ENCODE measurements at regions of chr15 and their contacts with region 1.

Region 1: DNA sequence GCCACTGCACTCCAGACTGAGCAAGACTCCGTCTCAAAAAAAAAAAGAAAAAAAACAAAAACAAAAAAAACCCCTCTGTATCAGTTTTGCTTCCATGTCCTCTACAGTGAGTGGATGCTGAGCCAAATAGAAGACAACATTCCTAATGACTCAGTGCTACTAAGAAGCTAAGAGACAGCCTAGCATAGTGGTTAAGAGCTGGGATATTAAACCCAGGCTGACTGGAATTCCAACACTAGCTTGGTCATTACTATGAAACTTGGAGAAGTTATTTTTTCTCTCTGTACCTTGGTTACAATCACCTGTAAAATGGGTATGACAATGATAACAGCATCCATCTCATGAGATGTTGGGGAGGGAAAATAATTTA is 60.9 kb upstream of the PYGO1 start:
- DNase-seq: no peak
- ATAC-seq: no peak
- H3K4me3 Mint-ChIP-seq: no peak overlapping the region
- H3K27ac Mint-ChIP-seq: no peak overlapping the region
- H3K4me1 Mint-ChIP-seq: no peaks in the 10 kb centered on the region
- H3K27me3 Mint-ChIP-seq: no peaks in the 10 kb centered on the region
- CTCF ChIP-seq: no peak

Region 2: DNA sequence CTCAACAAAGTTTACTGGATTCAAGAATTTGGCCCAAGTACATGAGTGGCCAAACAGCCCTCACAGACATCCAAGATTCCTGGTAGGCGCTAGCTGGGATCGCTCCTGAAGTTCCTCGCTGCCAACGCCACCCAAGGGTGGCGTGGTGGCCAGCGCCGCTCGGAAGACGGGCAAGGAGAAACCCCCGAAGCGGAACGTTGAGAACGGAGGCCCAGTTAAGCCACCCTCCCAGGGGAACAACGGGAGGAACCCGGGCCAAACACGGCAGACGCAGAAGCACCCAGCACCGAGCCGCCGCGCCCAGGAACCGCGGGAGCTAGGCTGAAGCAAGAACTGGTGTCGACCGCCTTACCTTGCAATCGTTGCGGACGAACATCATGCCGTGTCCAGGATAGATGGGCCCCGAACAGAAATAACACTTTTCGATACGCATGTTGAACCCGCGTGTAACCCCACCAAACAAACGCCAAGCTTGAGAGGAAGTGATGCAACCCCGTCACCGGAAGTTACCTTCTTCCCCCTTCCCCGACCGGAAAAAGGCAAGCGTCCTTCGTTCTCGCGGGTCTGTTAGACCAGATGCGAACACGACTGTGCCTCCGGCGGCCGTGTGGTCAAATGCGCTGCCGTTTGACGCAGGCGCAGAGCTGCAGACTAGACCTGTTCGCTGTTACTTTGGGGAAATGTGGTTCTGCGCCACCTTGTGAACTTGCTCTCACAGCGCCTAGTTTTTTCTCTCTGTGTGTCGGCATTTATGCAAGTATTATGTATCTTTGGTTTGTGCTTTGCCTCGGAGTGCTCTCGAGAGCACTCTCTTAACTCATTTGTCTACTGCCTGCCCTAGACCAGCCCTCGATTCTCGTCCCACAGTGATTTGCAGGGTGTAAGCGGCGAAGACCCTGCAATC is 452.3 kb before region 1 on chr15 and contains the start of gene RSL24D1:
- CTCF ChIA-PET with region 1: no interaction called
- POLR2A ChIA-PET with region 1: no interaction called
- intact Hi-C with region 1: loop called (anchors 5 kb)
- DNase-seq: peak; percentile 84
- ATAC-seq: peak; percentile 95
- H3K4me3 Mint-ChIP-seq: no peak within 1 kb of the TSS
- H3K27ac Mint-ChIP-seq: no peak within 1 kb of the TSS
- H3K4me1 Mint-ChIP-seq: peaks cover 9% of the 10 kb centered on the region
- H3K27me3 Mint-ChIP-seq: no peaks in the 10 kb centered on the region
- CTCF ChIP-seq: no peak
- total RNA-seq, gene RSL24D1: 90.0 and 99.5 TPM in 2 replicates

Region 3: DNA sequence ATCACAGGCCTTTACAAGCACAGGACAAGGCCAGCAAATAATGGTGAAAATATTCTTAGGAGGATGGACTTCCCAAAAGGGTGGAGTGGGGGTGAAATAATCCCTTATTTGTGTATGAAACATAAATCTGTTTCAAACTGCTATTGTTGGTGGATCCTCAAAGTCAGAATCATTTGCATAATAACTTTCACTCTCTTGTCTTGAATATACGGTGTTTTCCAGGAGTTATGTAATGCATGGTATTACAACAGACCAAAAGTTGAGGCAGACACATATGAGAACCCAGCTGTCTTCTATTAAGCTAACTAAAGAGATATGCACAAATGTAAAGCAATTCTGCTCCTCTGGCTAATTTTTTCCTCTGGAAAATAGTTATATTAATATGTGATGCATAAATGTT is 36.2 kb after region 1 on chr15:
- CTCF ChIA-PET with region 1: no interaction called
- POLR2A ChIA-PET with region 1: no interaction called
- intact Hi-C with region 1: no loop called
- DNase-seq: no peak
- ATAC-seq: peak; percentile 62
- H3K4me3 Mint-ChIP-seq: no peak overlapping the region
- H3K27ac Mint-ChIP-seq: no peak overlapping the region
- H3K4me1 Mint-ChIP-seq: peaks cover 12% of the 10 kb centered on the region
- H3K27me3 Mint-ChIP-seq: no peaks in the 10 kb centered on the region
- CTCF ChIP-seq: no peak

Region 4: DNA sequence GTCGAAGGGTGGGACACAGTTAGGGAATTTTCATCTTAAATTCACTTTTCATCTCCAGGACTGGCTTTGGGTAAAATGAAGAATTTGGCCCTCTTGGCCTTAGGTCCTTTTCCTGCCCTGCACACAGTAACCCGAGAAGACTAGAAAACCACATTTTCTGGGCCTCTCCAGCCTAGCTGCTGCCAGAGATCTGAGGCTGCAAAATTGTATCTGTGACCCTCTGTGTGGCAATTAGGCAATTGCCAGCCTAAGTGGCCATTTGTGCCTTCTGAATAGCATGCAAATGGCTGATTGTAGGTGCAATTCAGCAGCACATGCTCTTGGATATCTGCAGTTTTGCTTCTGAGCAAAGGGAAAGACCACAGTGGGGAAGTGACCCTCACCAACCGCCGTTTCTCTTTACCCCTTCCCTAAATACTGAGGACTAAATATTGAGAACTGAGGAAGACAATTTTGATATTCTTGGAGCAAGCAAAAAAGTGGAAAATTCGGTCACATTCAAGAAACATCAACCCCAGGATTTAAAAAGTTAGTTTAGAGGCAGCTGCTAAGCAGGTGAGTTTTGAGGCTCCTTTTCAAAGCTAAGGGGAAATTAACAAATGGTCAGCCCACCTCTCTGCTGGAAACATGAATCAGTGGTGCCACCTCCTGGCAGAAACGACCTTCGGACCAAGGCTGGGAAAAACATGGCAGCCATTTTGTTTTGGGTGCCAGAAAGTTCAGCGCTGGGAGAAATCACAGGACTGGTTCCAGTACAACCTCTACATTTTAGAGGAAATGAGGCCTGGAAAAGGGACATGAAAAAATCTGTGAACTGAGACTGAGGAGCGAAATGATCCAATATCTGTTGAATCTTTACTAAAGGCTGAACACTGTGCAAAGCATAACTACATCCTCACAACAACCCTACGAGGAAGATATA is 150.5 kb after region 1 on chr15:
- CTCF ChIA-PET with region 1: interaction called, 4 read pairs
- POLR2A ChIA-PET with region 1: no interaction called
- intact Hi-C with region 1: loop called (anchors 1 kb)
- DNase-seq: no peak
- ATAC-seq: no peak
- H3K4me3 Mint-ChIP-seq: no peak overlapping the region
- H3K27ac Mint-ChIP-seq: no peak overlapping the region
- H3K4me1 Mint-ChIP-seq: no peaks in the 10 kb centered on the region
- H3K27me3 Mint-ChIP-seq: peaks cover 18% of the 10 kb centered on the region
- CTCF ChIP-seq: no peak

Region 5: DNA sequence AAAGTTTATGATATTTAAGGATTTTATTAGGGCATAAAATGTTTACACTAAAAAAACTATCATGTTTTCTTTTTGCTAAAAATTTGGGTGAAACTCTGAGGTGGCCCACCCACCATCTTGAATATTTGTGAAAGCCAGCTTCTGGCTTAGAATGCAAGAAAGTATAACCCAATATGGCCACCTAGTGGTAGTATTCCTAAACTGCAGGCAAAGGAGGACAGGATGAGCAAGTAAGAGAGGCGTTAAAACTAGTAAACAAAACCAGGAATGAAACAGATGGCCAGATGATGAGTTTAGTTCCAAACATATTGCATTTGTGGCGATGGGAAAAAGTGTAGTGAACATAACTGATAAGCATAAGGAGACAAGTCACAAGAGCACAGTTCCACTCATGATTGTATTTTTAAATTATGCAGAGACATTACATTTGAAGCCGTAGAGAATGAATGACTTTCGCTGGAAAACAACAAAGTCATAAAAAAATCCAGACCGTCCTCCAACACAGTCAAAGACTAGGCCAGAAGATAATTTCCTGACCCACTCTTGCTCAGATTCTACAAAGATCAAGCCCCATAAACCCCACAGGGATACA is 197.2 kb after region 1 on chr15:
- CTCF ChIA-PET with region 1: interaction called, 34 read pairs
- POLR2A ChIA-PET with region 1: no interaction called
- intact Hi-C with region 1: loop called (anchors 1 kb)
- DNase-seq: no peak
- ATAC-seq: no peak
- H3K4me3 Mint-ChIP-seq: no peak overlapping the region
- H3K27ac Mint-ChIP-seq: no peak overlapping the region
- H3K4me1 Mint-ChIP-seq: no peaks in the 10 kb centered on the region
- H3K27me3 Mint-ChIP-seq: no peaks in the 10 kb centered on the region
- CTCF ChIP-seq: peak; percentile 18

Region 6: GRCh38 chr15:56052395-56053045 is 403.5 kb after region 1 on chr15:
- CTCF ChIA-PET with region 1: interaction called, 3 read pairs
- POLR2A ChIA-PET with region 1: no interaction called
- intact Hi-C with region 1: loop called (anchors 1 kb)
- DNase-seq: no peak
- ATAC-seq: peak; percentile 47
- H3K4me3 Mint-ChIP-seq: no peak overlapping the region
- H3K27ac Mint-ChIP-seq: no peak overlapping the region
- H3K4me1 Mint-ChIP-seq: no peaks in the 10 kb centered on the region
- H3K27me3 Mint-ChIP-seq: no peaks in the 10 kb centered on the region
- CTCF ChIP-seq: peak; percentile 82

Region 7: GRCh38 chr15:56428821-56429458 is 779.9 kb after region 1 on chr15:
- CTCF ChIA-PET with region 1: interaction called, 7 read pairs
- POLR2A ChIA-PET with region 1: no interaction called
- intact Hi-C with region 1: loop called (anchors 1 kb)
- DNase-seq: no peak
- ATAC-seq: no peak
- H3K4me3 Mint-ChIP-seq: no peak overlapping the region
- H3K27ac Mint-ChIP-seq: no peak overlapping the region
- H3K4me1 Mint-ChIP-seq: no peaks in the 10 kb centered on the region
- H3K27me3 Mint-ChIP-seq: no peaks in the 10 kb centered on the region
- CTCF ChIP-seq: no peak

Region 8: DNA sequence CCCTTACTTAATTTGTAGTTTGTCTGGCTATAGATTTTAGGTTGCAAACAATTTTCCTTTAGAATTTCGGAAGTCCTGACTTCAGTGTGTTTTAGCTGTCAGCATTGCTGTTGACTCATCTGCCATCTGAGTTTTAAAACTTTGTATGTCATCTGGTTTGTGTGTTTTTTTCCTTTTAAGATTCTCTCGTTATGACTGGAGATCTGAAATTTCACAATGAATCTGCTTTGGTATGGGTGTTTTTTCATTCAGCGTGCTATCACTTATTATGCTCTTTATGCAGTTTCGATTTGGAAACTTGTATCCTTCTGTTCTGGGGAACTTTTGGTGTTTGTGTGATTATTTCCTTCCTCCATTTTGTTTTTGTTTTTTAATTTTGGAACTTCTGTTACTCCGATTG is 1137.9 kb after region 1 on chr15:
- CTCF ChIA-PET with region 1: no interaction called
- POLR2A ChIA-PET with region 1: no interaction called
- intact Hi-C with region 1: no loop called
- DNase-seq: no peak
- ATAC-seq: peak; percentile 31
- H3K4me3 Mint-ChIP-seq: no peak overlapping the region
- H3K27ac Mint-ChIP-seq: no peak overlapping the region
- H3K4me1 Mint-ChIP-seq: peaks cover 6% of the 10 kb centered on the region
- H3K27me3 Mint-ChIP-seq: no peaks in the 10 kb centered on the region
- CTCF ChIP-seq: no peak

Measured in activated B cell treated with CpG ODN at 0.5 μM for 24 hours (primary cell).